A549 (cell line): ENCODE measurements at regions of chr15 and their contacts with region 1.

Region 1: GRCh38 chr15:40569139-40569953 is at the start of gene RPUSD2:
- DNase-seq: peak; percentile 86 to 87
- ATAC-seq: peak; percentile 71 to 76
- H3K4me3 ChIP-seq: peak within 1 kb of the TSS; percentile 65
- H3K27ac ChIP-seq: peak within 1 kb of the TSS; percentile 75 to 91
- H3K4me1 ChIP-seq: peaks cover 11% of the 10 kb centered on the region
- CTCF ChIP-seq: no peak
- EP300 ChIP-seq: no peak
- POLR2A ChIP-seq: peak; percentile 82
- RAD21 ChIP-seq: no peak
- polyA plus RNA-seq, gene RPUSD2: 6.7 and 7.3 TPM in 2 replicates

Region 2: GRCh38 chr15:40584191-40584590 is 14.8 kb after region 1 on chr15:
- CTCF ChIA-PET with region 1: interaction called, 8 read pairs
- POLR2A ChIA-PET with region 1: interaction called, 11 read pairs
- DNase-seq: no peak
- ATAC-seq: no peak
- H3K4me3 ChIP-seq: peak overlapping the region; percentile 54
- H3K27ac ChIP-seq: peak overlapping the region; percentile 82 to 93
- H3K4me1 ChIP-seq: peaks cover 9% of the 10 kb centered on the region; the same call in 2 of the 3 replicates
- CTCF ChIP-seq: no peak
- EP300 ChIP-seq: no peak
- POLR2A ChIP-seq: no peak
- RAD21 ChIP-seq: no peak